Head of caudate nucleus (tissue), 42 donors: ENCODE measurements at regions of chr11 and their contacts with region 1.

Region 1: DNA sequence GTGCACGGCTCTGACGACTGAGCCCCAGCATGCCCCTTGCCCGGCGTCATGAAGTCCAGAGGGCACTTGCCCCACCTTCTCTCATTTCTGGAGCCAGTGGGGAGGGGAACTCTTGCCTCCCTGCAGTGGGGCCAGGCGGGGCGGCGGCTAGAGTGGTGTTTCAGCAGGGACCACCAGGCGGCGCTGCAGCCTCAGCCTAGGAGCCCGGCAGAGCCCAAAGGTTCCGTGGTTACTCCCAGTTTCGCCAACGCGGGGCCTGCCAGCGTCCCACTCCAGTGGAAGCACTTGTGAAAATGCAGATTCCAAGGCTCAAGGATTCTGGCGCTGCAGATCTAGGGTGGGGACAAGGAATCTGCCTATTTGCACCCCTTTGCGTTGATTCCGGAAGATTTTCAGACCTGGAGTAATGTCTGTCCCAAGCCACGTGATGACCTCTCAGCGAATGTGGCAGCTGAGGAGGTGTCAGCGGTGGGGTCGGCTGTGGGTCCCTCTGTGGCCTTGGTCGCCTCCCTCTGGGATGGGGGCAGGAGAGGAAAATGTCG is 55.7 kb downstream of the CD82 start:
- DNase-seq: peak; percentile 66 to 95 (median 86)

Region 2: DNA sequence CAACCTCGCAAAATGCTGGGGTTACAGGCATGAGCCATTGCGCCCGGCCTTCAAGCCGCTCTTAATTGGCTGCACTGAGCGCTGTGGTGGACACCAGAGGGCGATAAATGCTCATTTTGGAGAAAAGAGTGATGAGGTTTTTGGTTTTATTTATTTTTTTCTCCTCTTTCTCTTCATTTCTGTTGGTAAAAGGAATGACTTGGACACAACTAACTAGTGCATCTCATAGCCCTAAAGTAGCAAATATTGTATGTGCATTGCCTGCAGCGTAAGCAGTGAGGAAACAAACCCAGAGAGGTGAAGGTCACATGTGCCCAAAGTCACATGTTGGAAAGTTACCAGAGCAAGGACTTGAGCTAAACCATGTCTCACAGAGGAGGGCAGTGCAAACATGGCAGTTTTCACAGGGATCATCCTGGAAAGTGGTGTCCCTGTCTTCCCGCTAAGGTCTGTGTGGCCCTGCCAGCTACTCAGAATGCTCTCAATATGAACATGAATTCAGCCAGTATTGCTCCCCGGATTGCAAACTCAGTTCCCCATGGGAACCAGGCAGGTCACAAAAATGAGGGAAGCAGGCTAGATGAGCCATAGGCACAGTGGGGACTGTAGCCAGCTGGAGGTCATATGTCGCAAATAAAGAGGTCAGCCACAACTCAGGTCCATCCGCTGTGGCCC is 64.3 kb before region 1 on chr11:
- intact Hi-C with region 1: loop called (anchors 2 kb)
- DNase-seq: peak; percentile 35 to 92 (median 76)

Region 3: GRCh38 chr11:44727373-44728287 is 106.4 kb after region 1 on chr11:
- intact Hi-C with region 1: loop called (anchors 5 kb)
- DNase-seq: peak; percentile 56 to 93 (median 86)

Region 4: DNA sequence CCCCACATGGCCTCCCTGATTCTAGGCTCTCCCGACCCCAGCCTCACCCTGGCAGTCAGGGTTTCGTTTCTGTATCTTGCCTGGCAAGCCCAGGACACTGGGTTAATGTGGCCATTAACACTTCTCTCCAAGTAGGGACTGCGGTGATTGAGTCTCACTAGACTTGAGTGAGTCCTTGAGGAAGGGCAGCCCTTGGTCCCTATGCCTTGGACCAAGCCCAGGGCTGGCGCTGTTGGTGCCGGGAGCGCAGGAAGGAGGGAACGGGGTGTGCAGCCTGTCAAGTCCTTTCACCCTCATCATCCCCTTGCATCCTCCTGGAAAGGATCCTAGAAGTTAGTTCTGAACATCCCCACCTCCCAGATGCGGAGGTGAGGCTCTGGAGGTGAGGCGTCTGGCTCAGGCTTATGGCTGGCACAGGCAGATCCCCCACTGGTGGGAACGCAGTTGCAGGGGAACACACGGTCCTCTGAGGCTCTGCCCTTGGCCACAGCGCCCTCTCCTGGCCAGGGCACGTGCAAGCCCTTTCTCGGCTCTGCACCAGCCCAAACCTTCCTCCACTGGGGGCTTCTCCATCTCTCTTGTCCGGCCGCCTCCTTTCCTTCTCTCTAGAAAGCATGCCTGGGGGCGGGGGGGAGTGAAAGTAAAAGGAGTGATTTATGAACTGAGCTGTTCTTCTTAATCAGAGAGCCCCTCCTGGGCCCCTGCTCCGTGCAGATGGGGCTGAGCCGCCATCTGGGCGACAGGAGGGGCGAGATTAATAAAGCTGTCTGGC is 272.8 kb after region 1 on chr11:
- intact Hi-C with region 1: loop called (anchors 5 kb)
- DNase-seq: peak; percentile 63 to 90 (median 82)

Region 5: GRCh38 chr11:44911029-44911814 is 290.0 kb after region 1 on chr11:
- intact Hi-C with region 1: loop called (anchors 2 kb)
- DNase-seq: peak; percentile 57 to 99 (median 92)

Region 6: DNA sequence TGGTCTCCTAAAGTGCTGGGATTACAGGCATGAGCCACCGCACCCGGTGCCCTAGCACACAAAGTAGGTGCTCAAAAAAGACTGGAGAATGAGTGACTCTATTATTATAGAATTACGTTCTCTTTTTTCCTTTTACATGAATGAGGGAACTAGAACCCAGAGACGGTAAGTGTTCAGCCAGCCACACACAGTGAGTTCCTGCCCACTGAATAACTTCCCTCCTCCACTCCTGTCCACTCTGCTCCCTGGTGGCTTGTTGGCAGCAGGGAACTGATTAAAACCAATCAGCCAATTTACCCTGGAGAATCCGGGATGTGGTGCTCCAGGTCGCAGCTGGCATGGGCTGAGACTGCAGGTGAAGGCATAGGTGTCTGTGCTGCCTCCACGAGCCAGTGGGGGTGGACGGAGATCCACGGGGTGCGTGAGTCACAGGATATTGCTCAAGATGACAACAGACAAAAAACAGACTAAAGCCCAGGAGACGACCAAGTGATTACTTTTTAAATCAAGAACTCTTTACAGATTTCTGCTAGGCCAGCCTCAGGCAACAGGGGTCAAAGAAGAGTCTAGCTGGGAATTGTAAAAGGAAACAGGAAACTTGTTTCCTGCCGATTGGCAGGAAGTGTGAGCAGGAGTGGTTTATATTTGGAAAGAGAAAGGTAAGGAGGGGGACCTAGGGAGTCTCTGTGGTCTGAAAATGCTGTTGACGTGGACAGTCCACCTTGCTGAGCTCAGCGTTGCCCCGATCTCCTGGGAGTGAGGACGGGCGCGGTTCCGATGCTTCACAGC is 424.7 kb after region 1 on chr11:
- intact Hi-C with region 1: no loop called
- DNase-seq: peak; percentile 29 to 91 (median 66)

Region 7: GRCh38 chr11:45102810-45103621 is 481.8 kb after region 1 on chr11:
- intact Hi-C with region 1: loop called (anchors 10 kb)
- DNase-seq: peak in 38 of 42 donors; percentile 34 to 84 (median 64)